Activated CD4-positive, alpha-beta memory T cell treated with anti-CD3 and anti-CD28 coated beads, Interleukin-2, amount 10 ng/mL, durations not matched to agents 7 days and 5 days (primary cell): ENCODE measurements at regions of chr11 and their contacts with region 1.

Region 1: DNA sequence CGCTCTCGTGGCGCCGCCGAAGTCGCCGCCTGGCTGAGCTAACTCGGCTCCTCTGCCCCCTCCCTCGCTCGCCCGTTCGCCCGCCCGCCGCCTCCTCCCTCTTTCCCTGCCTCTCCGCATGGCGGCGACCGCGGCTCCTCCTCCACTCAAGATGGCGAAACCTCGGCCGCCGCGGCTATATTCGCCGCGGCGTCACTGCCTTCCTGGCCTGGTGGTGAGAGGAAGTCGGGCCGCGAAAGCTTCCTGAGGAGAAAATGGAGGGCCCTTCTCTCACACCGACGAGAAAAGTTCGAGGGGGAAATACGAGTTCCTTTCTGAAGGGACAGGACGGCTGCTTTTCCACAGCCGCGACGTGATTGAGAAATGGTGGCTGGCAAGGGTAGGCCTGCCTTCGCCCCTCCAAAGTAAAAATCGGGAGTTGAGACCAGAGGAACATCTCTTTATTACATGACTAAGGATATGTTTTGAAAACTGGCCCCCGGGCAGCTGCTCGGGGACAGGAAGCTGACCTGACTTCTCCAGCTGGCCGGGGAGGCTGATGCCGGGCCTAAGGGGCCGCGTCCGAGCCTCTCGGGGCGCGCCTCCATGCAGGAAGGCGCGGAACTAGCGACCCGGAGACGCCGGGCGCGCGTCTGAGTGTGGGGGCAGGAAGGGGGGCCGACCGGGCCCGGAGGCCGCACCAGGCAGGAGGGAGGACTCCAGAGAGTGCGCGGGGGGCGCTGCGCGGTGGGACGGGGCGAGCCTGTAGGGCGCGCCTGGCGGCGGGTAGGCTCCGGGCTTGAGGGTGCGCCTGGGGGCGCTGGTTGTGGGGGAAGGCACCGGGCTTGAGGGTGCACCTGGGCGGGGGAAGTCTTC is at the start of gene DDX6:
- DNase-seq: peak; percentile 93
- H3K4me3 Mint-ChIP-seq: peak within 1 kb of the TSS; percentile 100
- H3K27ac Mint-ChIP-seq: peak within 1 kb of the TSS; percentile 95
- H3K4me1 Mint-ChIP-seq: peaks cover 19% of the 10 kb centered on the region
- H3K27me3 Mint-ChIP-seq: no peaks in the 10 kb centered on the region
- total RNA-seq, gene DDX6: 154 to 155 TPM

Region 2: GRCh38 chr11:118572061-118572980 is 219.0 kb before region 1 on chr11 and contains the start of gene ARCN1:
- CTCF ChIA-PET with region 1: no interaction called
- POLR2A ChIA-PET with region 1: interaction called, 18 read pairs
- DNase-seq: peak; percentile 82
- H3K4me3 Mint-ChIP-seq: peak within 1 kb of the TSS; percentile 93
- H3K27ac Mint-ChIP-seq: peak within 1 kb of the TSS; percentile 92
- H3K4me1 Mint-ChIP-seq: peaks cover 45% of the 10 kb centered on the region
- H3K27me3 Mint-ChIP-seq: no peaks in the 10 kb centered on the region
- total RNA-seq, gene ARCN1: 138 to 141 TPM

Region 3: DNA sequence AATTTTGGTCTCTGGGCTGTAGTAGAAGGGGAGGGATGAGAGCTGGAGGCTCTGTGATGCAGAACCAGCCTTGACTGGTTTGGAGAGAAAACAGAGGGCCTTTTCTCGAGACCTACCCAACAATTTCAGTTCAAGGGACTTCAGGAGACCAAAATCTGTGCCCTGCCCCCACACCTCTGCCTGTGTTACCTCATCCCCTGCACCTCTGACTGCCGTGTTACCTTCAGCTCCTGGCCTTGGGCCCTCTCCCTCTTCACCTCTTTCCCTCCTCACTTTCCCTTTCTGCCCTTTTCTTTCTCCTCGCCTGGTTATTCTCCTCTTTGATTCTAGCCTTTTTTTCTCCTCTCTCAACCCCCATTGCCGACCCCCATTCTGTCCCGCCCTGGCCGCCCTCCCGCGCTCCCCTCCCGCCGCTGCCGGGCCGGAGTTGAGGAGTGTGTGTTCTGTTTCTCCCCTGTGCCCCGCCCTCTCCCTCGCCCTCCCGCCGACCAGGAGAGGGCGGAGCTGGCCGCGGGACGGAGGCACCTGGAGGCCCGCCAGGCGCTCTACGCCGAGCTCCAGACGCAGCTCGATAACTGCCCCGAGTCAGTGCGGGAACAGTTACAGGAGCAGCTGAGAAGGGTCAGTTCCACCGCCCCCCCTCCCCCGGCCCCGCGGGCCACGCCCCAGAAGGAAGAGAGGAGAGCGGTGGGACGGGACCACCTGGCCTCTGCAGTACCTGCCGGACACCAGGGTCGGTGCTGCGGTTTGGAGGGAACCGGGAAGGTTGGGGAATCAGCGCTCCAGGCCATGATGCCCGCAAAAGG is 156.7 kb before region 1 on chr11:
- CTCF ChIA-PET with region 1: no interaction called
- POLR2A ChIA-PET with region 1: no interaction called
- DNase-seq: no peak
- H3K4me3 Mint-ChIP-seq: no peak overlapping the region
- H3K27ac Mint-ChIP-seq: no peak overlapping the region
- H3K4me1 Mint-ChIP-seq: no peaks in the 10 kb centered on the region
- H3K27me3 Mint-ChIP-seq: peaks cover 2% of the 10 kb centered on the region

Region 4: GRCh38 chr11:118804094-118804493 is 12.8 kb after region 1 on chr11:
- CTCF ChIA-PET with region 1: interaction called, 22 read pairs
- POLR2A ChIA-PET with region 1: interaction called, 22 read pairs
- DNase-seq: no peak
- H3K4me3 Mint-ChIP-seq: no peak overlapping the region
- H3K27ac Mint-ChIP-seq: no peak overlapping the region
- H3K4me1 Mint-ChIP-seq: no peaks in the 10 kb centered on the region
- H3K27me3 Mint-ChIP-seq: peaks cover 9% of the 10 kb centered on the region

Region 5: DNA sequence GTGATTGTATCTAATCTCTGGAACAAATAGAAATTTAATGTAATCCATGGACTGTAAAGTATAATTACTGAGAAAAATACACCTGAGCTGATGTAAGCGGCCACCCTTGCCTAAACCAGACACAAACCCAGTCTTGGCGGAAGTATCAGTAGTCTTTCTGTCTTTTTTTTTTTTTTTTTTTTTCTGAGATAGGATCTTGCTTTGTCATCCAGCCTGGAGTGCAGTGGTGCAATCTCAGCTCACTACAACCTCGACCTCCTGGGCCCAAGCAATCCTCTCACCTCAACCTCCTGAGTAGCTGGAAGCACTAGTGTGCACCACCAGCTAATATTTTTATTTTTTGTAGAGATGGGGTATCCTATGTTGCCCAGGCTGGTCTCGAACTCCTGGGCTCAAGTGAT is 86.8 kb after region 1 on chr11:
- CTCF ChIA-PET with region 1: interaction called, 20 read pairs
- POLR2A ChIA-PET with region 1: interaction called, 175 read pairs
- DNase-seq: no peak
- H3K4me3 Mint-ChIP-seq: no peak overlapping the region
- H3K27ac Mint-ChIP-seq: peak overlapping the region; percentile 93
- H3K4me1 Mint-ChIP-seq: peaks cover 84% of the 10 kb centered on the region
- H3K27me3 Mint-ChIP-seq: peaks cover 1% of the 10 kb centered on the region

Region 6: GRCh38 chr11:118907051-118908042 is 116.0 kb after region 1 on chr11:
- CTCF ChIA-PET with region 1: interaction called, 4 read pairs
- POLR2A ChIA-PET with region 1: interaction called, 72 read pairs
- DNase-seq: peak; percentile 88
- H3K4me3 Mint-ChIP-seq: no peak overlapping the region
- H3K27ac Mint-ChIP-seq: peak overlapping the region; percentile 45
- H3K4me1 Mint-ChIP-seq: peaks cover 34% of the 10 kb centered on the region
- H3K27me3 Mint-ChIP-seq: no peaks in the 10 kb centered on the region

Region 7: GRCh38 chr11:119018074-119018938 is 227.0 kb after region 1 on chr11 and contains the starts of genes RPS25 and TRAPPC4:
- CTCF ChIA-PET with region 1: interaction called, 3 read pairs
- POLR2A ChIA-PET with region 1: interaction called, 12 read pairs
- DNase-seq: peak; percentile 96
- H3K4me3 Mint-ChIP-seq: peak within 1 kb of the TSS; percentile 90
- H3K27ac Mint-ChIP-seq: peak within 1 kb of the TSS; percentile 100
- H3K4me1 Mint-ChIP-seq: peaks cover 56% of the 10 kb centered on the region
- H3K27me3 Mint-ChIP-seq: no peaks in the 10 kb centered on the region
- total RNA-seq, gene RPS25: 1,257 to 1,287 TPM
- total RNA-seq, gene TRAPPC4: 67.0 to 71.1 TPM